GM13976 (cell line): ENCODE measurements at regions of chr16 and their contacts with region 1.

Region 1: DNA sequence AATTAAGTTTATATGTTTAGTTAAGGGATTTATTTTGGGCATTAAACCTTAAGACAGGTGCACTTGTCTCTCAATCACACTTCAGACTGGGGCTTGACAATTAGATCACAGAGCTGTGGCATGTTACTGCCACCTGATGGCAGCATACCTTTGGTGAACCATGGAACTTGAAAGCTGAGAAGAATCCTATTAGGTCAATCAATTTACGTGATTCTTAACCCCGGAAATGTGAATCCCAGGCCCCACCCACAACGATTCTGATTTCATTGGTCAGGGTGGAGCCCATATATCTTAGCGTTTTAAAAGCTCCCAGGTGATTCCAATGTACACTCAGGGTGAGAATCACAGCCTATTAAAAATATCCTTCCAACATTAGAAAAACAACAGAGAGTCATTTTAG is 91.0 kb downstream of the GSG1L start:
- DNase-seq: peak; percentile 72
- CTCF ChIP-seq: peak; percentile 60

Region 2: GRCh38 chr16:28237754-28238357 is 265.4 kb after region 1 on chr16:
- in situ Hi-C with region 1: loop called (anchors 25 kb)
- DNase-seq: no peak
- CTCF ChIP-seq: no peak